Ascending aorta (tissue), 2 donors: ENCODE measurements at regions of chr2 and their contacts with region 1.

Region 1: GRCh38 chr2:206981739-206982340 is 42.5 kb downstream of the CPO start:
- DNase-seq: peak; percentile 29 to 88
- H3K4me3 ChIP-seq: no peak overlapping the region
- H3K27ac ChIP-seq: no peak overlapping the region
- H3K4me1 ChIP-seq: peaks cover 0 to 13% of the 10 kb centered on the region in 2 donors
- H3K27me3 ChIP-seq: no peaks in the 10 kb centered on the region
- CTCF ChIP-seq: peak; percentile 74 to 88 (median 80)

Region 2: GRCh38 chr2:206800506-206801417 is 181.1 kb before region 1 on chr2:
- intact Hi-C with region 1: loop called (anchors 5 kb)
- DNase-seq: peak in 1 of 2 donors; percentile 79
- H3K4me3 ChIP-seq: no peak overlapping the region
- H3K27ac ChIP-seq: no peak overlapping the region
- H3K4me1 ChIP-seq: peaks cover 0 to 4% of the 10 kb centered on the region in 2 donors
- H3K27me3 ChIP-seq: no peaks in the 10 kb centered on the region
- CTCF ChIP-seq: peak; percentile 51 to 67 (median 60)

Region 3: DNA sequence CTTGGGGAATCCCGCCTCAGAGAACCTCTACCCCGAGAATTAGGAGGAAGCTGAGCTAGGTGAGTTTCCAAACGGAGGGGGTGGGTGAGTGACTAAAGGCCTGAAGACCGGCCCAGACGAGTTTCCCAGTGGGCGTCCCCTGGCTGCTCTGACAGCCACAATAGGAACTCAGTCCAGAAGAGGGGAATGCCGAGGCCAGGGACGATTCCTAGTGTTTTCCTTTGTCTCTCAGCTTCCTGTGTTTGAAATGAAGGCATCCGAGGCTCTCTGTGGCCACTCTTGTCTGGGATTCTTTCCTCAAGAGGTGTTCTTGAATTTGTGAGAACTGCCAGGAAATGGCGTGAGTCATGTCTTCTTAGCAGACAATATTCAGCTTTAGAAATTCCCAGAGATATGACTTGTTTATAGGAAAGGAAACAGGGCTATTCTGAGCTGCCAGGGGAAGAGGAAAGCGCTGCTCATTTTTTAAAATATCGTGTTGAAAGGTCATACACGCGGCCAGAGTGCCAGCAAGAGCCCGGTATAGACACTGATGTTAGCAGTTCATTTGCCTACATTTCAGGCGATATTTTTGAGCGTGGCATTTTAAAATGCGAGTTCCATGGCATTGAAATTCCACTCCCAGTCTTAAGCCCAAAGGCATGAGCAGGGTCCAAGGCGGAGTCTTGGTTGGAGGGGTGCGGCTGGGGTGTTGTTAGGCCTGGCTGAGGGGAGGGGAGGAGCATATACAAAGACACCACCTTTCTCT is 353.0 kb after region 1 on chr2:
- intact Hi-C with region 1: loop called (anchors 5 kb)
- DNase-seq: peak; percentile 14 to 89
- H3K4me3 ChIP-seq: peak overlapping the region; percentile 32 to 50
- H3K27ac ChIP-seq: peak overlapping the region; percentile 80 to 83
- H3K4me1 ChIP-seq: peaks cover 0 to 5% of the 10 kb centered on the region in 2 donors
- H3K27me3 ChIP-seq: no peaks in the 10 kb centered on the region
- CTCF ChIP-seq: no peak

Region 4: DNA sequence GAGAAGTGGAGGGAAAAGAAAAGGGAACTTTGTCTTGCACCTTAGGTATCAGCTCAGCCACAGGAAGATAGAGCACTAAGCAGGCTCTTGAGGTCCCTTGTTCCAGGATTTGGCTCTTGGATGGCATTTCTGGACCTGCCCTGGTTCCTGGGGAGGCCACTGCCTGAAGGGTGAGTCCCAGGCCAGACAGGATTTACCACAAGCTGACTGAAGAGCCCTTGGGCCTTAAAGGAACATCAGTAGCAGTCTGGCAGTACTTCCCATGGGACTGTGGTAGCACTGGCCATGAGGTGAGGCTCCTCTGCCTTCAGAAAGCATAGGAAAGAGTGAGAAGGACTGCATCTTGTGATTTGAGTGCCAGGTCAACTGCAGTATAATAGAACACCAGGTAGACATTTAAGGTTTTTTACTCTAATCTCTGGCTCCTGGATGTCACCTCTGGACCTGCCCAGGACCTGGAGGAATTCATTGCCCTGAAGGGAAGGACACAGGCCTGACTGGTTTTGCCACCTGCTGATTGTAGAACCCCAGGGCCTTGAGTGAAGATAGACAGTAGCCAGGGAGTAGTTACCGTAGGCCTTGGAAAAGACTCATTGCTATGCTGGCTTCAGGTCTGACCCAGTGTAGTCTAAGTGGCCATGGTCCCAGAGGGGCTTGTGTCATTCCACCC is 393.5 kb after region 1 on chr2:
- intact Hi-C with region 1: no loop called
- DNase-seq: no peak
- H3K4me3 ChIP-seq: no peak overlapping the region
- H3K27ac ChIP-seq: no peak overlapping the region
- H3K4me1 ChIP-seq: no peaks in the 10 kb centered on the region
- H3K27me3 ChIP-seq: no peaks in the 10 kb centered on the region
- CTCF ChIP-seq: no peak

Region 5: GRCh38 chr2:207473049-207473930 is 491.4 kb after region 1 on chr2:
- intact Hi-C with region 1: loop called (anchors 1 kb)
- DNase-seq: peak in 1 of 2 donors; percentile 70
- H3K4me3 ChIP-seq: peak overlapping the region in 1 of 2 donors; percentile 52
- H3K27ac ChIP-seq: peak overlapping the region in 1 of 2 donors; percentile 7
- H3K4me1 ChIP-seq: peaks cover 0 to 3% of the 10 kb centered on the region in 2 donors
- H3K27me3 ChIP-seq: no peaks in the 10 kb centered on the region
- CTCF ChIP-seq: peak; percentile 45 to 80 (median 58)